Activated CD4-positive, alpha-beta T cell treated with anti-CD3 and anti-CD28 coated beads for 36 hours (primary cell): ENCODE measurements at regions of chr19 and their contacts with region 1.

Region 1: DNA sequence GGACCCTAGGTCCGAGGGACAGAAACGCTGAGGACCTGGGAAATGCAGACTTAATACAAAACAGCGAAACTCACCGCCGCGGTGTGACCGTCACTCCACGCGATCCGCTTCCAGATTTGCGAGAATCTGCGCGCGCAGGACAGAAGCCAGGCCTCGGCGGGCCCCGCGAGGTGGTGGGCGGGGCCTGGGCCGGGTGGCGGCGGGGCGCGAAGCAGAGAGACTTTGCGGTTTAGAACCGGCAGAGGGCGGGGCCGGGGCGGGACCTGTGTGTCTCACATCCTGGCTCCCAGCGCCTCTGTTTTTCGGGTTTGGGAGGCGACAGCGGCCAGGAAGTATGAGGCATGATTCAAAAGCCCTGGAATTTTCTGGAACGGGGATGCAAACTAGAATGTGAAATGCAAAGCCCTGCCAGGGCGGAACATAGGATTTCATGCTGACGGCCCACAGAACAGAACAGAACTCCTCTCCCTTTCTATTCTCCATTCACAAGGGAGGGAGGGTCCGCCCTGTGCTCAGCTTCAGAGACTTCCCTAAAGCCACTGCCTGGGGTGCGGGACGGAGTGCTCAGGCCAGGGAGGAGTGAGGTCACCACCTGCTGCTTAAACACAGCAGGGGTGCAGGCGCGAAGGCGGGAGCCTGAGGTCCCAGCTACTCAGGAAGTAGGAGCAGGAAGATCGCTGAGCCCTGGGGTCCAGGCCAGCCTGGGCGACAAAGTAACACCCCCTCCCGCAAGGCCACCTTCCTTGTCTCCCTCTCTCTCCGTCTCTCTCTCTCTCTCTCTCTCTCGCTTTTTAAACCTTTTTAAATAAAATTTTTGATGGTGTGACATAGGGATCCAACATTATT is 44.3 kb downstream of the ZNF611 start:
- DNase-seq: peak; percentile 96
- ATAC-seq: peak; percentile 95
- H3K4me3 Mint-ChIP-seq: peak overlapping the region; percentile 90
- H3K27ac Mint-ChIP-seq: peak overlapping the region; percentile 96
- H3K4me1 Mint-ChIP-seq: peaks cover 27% of the 10 kb centered on the region
- H3K27me3 Mint-ChIP-seq: no peaks in the 10 kb centered on the region

Region 2: GRCh38 chr19:52464798-52465470 is 225.7 kb before region 1 on chr19:
- CTCF ChIA-PET with region 1: no interaction called
- POLR2A ChIA-PET with region 1: no interaction called
- intact Hi-C with region 1: no loop called
- DNase-seq: no peak
- ATAC-seq: no peak
- H3K4me3 Mint-ChIP-seq: no peak overlapping the region
- H3K27ac Mint-ChIP-seq: no peak overlapping the region
- H3K4me1 Mint-ChIP-seq: no peaks in the 10 kb centered on the region
- H3K27me3 Mint-ChIP-seq: no peaks in the 10 kb centered on the region

Region 3: DNA sequence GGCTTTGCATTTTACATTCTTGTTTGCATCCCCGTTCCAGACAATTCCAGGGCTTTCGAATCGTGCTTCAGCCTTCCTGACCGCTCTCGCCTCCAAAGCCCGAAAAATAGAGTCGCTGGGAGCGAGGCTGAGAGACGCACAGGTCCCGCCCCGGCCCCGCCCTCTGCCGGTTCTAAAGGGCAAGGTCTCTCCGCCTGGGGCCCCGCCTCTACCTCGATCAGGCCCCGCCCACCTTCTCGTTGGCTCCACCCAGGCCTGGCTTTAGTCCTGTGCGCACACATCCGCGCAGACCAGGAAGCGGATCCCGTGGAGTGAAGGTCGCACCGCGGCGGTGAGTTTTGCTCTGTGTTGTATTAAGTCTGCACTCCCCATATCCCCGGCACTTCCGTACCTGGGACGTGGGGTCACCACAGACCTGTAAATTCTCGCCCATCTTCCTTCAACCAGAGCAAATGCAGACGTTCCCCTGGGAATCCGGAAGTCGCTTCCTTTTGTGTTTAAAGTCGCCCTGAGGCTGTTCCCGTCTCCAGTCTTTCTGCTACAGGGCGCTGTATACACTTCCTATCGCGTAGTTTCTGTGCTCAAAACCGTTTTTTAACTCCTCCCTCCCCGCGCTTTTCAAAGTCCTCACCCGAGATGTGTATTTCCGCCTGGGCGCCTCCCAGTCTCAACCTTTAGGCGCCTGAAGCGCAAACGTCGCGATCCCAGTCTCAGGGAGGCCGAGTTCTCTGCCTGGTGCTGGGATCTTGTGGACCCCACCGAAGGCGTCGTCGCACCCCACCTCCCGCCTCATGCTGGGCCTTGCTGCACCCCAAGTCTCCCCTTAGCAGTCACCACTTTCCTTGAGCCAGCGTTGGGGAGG is 120.4 kb before region 1 on chr19 and contains the start of gene ZNF701:
- CTCF ChIA-PET with region 1: no interaction called
- POLR2A ChIA-PET with region 1: no interaction called
- intact Hi-C with region 1: loop called in 1 of 2 experiments (anchors 1 kb)
- DNase-seq: peak; percentile 98
- ATAC-seq: peak; percentile 99
- H3K4me3 Mint-ChIP-seq: peak within 1 kb of the TSS; percentile 88
- H3K27ac Mint-ChIP-seq: peak within 1 kb of the TSS; percentile 96
- H3K4me1 Mint-ChIP-seq: peaks cover 27% of the 10 kb centered on the region
- H3K27me3 Mint-ChIP-seq: no peaks in the 10 kb centered on the region
- total RNA-seq, gene ZNF701: 19.0 to 21.5 TPM

Region 4: DNA sequence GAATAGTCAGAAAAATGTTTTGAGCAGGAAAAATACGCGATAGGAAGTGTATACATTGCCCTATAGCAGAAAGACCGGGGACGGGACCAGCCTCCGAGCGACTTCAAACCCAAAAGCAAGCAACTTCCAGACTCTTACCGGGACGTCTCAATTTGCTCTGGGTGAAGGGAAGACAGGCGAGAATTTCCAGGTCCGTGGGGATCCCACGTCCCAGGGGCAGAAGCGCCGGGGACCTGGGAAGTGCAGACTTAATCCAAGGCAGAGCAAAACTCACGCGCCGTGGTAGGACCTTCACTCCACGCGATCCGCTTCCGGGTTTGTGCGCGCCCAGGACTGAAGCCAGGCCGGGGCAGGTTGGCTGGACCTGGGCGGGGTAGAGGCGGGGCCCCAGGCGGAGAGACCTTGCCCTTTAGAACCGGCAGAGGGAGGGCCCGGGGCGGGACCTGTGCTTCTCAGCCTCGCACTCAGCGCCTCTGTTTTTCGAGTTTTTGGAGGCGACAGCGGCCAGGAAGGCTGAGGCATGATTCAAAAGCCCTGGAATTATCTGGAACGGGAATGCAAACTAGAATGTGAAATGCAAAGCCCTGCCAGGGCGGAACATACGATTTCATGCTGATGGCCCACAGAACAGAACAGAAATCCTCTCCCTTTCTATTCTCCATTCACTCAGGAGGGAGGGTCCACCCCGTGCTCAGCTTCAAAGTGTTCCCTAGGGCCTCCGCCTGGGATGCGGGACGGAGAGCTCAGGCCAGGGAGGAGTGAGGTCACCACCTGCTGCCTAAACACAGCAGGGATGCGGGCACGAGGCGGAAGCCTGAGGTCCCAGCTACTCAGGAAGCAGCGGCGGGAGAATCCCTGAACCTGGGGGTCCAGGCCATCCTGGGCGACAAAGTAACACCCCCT is 96.1 kb after region 1 on chr19 and contains the start of gene ZNF600:
- CTCF ChIA-PET with region 1: no interaction called
- POLR2A ChIA-PET with region 1: no interaction called
- intact Hi-C with region 1: no loop called
- DNase-seq: peak; percentile 83
- ATAC-seq: peak; percentile 99
- H3K4me3 Mint-ChIP-seq: peak within 1 kb of the TSS; percentile 87
- H3K27ac Mint-ChIP-seq: peak within 1 kb of the TSS; percentile 84
- H3K4me1 Mint-ChIP-seq: peaks cover 23% of the 10 kb centered on the region
- H3K27me3 Mint-ChIP-seq: no peaks in the 10 kb centered on the region
- total RNA-seq, gene ZNF600: 10.6 to 14.3 TPM

Region 5: GRCh38 chr19:52853880-52854279 is 163.3 kb after region 1 on chr19:
- CTCF ChIA-PET with region 1: no interaction called
- POLR2A ChIA-PET with region 1: no interaction called
- intact Hi-C with region 1: no loop called
- DNase-seq: no peak
- ATAC-seq: no peak
- H3K4me3 Mint-ChIP-seq: no peak overlapping the region
- H3K27ac Mint-ChIP-seq: no peak overlapping the region
- H3K4me1 Mint-ChIP-seq: peaks cover 23% of the 10 kb centered on the region
- H3K27me3 Mint-ChIP-seq: no peaks in the 10 kb centered on the region